ENCODE measurements at regions of chr4 and their contacts with region 1.

Region 1: DNA sequence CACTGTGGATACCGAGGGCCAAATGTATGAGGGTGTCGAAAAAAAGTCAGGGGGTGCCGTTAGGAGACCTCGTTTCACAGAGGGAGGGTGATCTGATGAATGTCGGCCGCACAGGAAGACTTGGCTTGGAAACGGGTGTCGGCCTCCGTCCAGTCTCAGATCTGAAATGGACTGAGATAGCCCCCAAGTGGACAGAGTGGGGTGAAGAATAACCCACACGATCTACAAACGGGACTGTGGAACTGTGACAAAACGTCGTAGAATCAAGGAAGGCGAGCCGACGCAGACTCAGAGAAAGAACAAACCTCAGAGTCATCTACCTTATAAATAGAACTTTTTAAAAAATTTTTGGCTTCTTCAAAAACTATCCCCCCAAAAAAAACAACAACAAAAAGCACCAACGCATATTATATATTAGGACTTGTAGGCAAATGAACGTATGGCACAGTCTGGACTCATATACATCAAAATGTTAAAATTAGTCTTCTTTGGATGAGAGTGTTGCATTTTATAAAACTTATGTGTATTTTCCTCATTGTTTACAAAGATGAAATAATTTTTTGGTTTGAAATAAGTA is 63.8 kb upstream of the IRF2 start:
- DNase-seq: peak; percentile 81 to 90 (median 87)
- ATAC-seq: peak; percentile 88
- H3K4me3 ChIP-seq: no peak overlapping the region
- H3K4me1 ChIP-seq: peaks cover 15% of the 10 kb centered on the region
- CTCF ChIP-seq: peak; percentile 33

Region 2: DNA sequence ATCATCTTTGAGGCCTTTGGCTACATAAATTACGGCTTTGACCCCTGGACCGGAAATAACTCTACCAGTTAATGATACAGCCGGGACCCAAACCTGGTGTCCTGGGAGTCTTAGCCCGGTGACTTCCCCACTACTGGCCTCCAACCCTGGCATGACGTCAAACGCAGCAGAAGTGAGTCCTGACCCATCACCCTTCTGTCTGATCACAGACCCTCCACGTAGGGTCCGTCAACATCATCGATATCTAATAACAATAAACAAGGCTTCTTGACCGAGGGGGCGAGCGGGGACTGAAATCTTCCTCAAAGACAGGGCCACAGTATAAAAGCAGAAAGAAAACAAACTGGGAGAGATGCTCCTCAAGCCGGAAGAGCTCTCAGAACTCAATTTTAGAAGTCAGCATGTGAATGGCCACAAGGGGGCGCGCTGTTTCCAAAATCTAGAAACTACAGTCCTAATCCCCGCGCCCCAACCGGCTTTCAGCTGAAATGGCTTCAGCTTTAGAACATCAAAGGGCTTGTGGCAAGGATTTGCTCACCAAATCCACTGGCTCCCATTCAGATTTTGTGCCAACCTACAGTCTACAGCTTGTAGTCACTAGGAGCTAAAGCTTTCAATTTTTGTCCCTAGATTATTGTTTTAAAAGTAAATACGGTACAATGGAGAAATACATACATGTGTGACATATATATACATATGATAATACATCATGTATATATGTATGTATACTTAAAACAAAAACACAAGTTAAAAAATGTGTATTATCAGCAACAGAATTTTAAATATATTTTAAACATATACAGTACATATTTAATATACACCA is 274.0 kb before region 1 on chr4:
- intact Hi-C with region 1: loop called in 1 of 2 experiments (anchors 2 kb)
- DNase-seq: peak; percentile 91 to 99 (median 92)
- ATAC-seq: peak; percentile 89
- H3K4me3 ChIP-seq: no peak overlapping the region
- H3K4me1 ChIP-seq: no peaks in the 10 kb centered on the region
- CTCF ChIP-seq: peak; percentile 75

Region 3: GRCh38 chr4:184273166-184274147 is 264.7 kb before region 1 on chr4:
- intact Hi-C with region 1: loop called in 1 of 2 experiments (anchors 5 kb)
- DNase-seq: no peak
- ATAC-seq: no peak
- H3K4me3 ChIP-seq: no peak overlapping the region
- H3K4me1 ChIP-seq: no peaks in the 10 kb centered on the region
- CTCF ChIP-seq: no peak

Region 4: DNA sequence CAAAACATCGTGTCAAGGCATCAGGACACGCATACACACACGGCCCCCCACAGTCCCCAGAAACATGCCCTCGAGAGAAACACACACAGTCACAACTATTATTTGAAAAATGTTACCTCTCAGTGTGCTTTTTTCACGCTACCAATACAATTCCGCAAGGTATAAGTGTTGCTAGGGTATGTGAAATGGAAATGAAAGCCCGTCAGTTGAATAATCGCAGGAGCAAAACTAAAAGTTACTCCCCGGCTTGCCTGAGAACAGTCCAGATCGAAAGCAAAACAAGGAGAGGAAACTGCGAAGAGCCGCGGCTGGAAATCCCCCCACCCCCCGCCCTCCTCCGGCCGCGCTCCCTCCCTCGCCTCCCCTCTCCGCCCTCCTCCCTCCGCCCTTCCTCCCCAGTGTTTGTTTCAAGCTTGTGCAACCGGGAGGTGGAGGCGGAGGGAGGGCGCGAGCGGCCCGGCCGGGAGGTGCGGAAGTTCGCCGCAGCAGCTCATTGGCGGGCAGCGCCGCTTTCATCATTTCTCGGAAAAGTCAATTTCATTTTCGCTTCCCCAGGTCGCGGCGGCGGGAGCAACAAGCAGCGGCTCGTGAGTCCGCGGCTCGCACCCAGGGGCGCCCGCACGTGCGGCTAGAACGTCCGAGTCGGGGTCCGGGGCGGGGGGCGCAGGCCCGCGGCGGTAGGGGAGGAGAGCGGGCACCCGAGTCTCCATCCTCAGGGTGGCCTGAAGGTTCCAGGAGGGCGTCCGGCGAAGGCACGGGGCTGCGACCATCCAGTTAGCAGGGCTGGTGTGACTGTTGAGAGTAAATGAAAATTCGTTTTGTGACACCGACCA is 63.6 kb before region 1 on chr4 and contains the start of gene IRF2:
- intact Hi-C with region 1: loop called (anchors 5 to 10 kb)
- DNase-seq: peak; percentile 96 to 99 (median 97)
- ATAC-seq: peak; percentile 85
- H3K4me3 ChIP-seq: peak within 1 kb of the TSS; percentile 91
- H3K4me1 ChIP-seq: peaks cover 17% of the 10 kb centered on the region
- CTCF ChIP-seq: no peak
- total RNA-seq, gene IRF2: 39.3 to 59.8 (median 53.5) TPM

Region 5: DNA sequence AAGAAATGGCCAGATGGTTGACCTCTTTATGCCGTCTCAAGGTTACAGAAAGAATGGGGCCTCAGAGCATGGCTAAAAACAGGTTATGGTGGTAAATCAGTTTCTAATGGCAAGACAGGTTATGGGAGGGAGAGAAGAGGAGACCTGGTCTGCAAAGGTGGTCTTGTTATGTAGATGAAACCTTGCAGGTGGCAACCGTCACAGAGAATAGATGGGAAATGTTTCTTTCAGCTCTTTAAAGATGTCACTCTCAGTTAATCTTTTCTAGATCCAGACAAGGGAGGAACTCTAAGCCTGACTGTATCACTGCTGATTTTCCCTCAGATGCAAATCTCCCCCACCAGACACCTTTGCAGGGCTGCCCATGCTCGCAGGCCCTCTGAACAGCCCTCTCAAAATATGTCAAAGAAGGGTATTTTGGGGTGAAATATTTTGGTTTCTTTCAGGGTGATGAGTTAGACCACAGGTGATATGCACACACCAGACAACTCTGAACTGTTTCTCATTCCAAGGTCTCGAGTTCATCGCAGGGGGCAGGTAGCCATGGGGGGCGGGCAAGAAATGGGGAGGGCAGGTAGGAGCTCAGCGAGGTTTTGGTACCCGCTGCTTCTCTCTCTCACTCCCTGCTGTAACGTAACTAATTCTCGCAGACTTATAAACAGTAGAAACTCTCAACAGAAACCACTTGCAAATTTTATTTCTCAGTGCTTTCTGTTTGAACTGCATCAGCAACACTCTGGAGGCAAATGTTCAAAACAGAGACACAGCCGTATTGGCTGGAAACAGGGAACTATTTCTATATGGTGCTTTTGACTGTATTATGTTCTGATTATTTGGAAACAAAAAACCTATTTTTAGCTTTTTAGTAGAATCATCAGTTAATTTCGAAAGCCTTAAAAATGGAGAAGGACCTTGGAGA is 78.8 kb after region 1 on chr4:
- intact Hi-C with region 1: no loop called
- DNase-seq: no peak
- ATAC-seq: no peak
- H3K4me3 ChIP-seq: no peak overlapping the region
- H3K4me1 ChIP-seq: no peaks in the 10 kb centered on the region
- CTCF ChIP-seq: no peak

Measured in mucosa of descending colon (tissue), 3 donors.